Thyroid gland (tissue), 4 donors: ENCODE measurements at regions of chr7 and their contacts with region 1.

Region 1: DNA sequence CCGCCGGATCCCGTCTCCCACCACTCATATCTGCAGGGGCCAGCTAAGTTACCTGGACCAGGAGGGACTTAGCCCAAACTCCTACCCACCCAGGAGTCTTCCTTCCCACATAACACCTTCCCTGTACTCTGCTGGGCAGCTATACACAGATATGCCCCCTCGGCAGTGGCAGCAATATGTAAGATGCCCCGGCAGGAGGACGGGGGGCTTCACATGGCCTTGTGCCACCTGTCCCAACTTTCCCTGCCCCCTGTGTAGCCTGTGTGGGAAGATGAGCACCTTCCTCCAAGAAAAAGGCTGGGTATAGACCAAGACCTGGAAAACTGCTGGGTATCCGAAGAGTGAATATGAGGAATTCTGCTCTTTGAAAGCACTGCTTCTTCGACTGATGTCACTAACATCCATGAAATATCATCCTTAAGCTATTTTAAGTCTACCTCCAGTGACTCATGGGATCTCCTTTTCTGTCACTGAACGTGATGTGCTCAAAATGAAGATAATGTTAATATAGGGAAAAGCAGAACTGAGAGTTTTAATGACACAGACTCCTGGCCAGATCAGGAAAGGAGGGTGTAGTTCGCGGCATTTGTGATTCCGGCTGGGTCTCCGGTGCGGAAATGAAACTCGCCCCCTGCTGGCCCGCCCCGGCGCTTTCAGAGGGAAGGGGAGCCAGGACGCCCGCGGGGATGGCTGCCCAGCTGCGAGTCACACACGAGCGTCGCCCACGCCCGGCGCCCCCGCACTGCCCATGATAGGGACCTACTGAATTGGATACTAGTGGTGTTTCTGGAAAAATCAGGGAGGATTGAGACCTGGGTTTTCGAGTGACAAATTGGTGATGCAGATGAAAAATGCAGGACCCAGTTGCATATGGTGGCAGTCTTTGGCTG is 256.9 kb upstream of the NFE2L3 start:
- DNase-seq: peak; percentile 49 to 62
- H3K4me3 ChIP-seq: no peak overlapping the region
- H3K27ac ChIP-seq: no peak overlapping the region
- H3K4me1 ChIP-seq: peaks cover 0 to 7% of the 10 kb centered on the region in 2 donors
- H3K27me3 ChIP-seq: no peaks in the 10 kb centered on the region
- CTCF ChIP-seq: peak; percentile 26 to 77 (median 50)
- POLR2A ChIP-seq: no peak

Region 2: GRCh38 chr7:26061688-26062150 is 166.6 kb after region 1 on chr7:
- intact Hi-C with region 1: loop called (anchors 2 kb)
- DNase-seq: peak; percentile 71 to 78
- H3K4me3 ChIP-seq: no peak overlapping the region
- H3K27ac ChIP-seq: no peak overlapping the region
- H3K4me1 ChIP-seq: no peaks in the 10 kb centered on the region
- H3K27me3 ChIP-seq: no peaks in the 10 kb centered on the region
- CTCF ChIP-seq: peak; percentile 37 to 85 (median 60)
- POLR2A ChIP-seq: no peak